HepG2 (cell line): ENCODE measurements at regions of chr2 and their contacts with region 1.

Region 1: DNA sequence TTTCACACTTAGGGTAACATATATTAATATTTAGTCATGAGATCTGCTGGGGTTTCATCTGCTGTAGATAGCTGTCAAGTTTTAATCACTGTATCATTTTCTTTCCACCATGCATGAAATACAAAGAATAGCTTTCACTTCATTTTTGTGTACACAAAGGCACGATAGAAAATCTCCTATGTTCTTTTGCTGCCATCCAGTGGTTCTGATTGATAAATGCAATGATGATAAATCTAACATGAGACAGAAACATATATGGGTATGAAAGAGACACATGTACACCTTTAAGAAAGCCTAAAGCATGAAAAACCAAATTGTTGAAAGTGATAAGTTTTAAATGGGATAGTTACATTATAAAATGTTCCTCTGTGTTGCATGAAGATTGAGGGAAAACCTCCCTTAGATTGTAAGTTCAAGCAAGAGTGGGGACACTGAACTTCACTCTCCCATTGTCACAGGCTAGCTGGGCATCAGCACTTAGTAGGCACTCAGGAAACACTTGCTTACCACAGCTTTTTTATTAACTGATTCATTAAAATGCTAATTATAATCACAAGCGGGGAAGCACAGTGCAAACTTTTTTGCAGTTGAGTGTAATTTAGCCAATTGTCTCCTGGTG is 31.2 kb downstream of the C1D start:
- DNase-seq: peak; percentile 64
- ATAC-seq: peak; percentile 83
- H3K4me3 ChIP-seq: no peak overlapping the region
- H3K27ac ChIP-seq: no peak overlapping the region
- H3K4me1 ChIP-seq: no peaks in the 10 kb centered on the region
- H3K27me3 ChIP-seq: no peaks in the 10 kb centered on the region
- CTCF ChIP-seq: peak; percentile 84
- EP300 ChIP-seq: no peak
- POLR2A ChIP-seq: no peak
- RAD21 ChIP-seq: peak; percentile 74

Region 2: GRCh38 chr2:66434679-66435548 is 1596.7 kb before region 1 on chr2 and contains the start of gene MEIS1:
- CTCF ChIA-PET with region 1: no interaction called
- POLR2A ChIA-PET with region 1: no interaction called
- in situ Hi-C with region 1: loop called (anchors 25 kb)
- intact Hi-C with region 1: no loop called
- DNase-seq: peak; percentile 91
- ATAC-seq: peak; percentile 90
- H3K4me3 ChIP-seq: peak within 1 kb of the TSS; percentile 71 to 93 (median 85)
- H3K27ac ChIP-seq: peak within 1 kb of the TSS; percentile 72
- H3K4me1 ChIP-seq: peaks cover 19% of the 10 kb centered on the region
- H3K27me3 ChIP-seq: peaks cover 0 to 11% of the 10 kb centered on the region in 2 experiments; a peak in 3 of 5 replicates
- CTCF ChIP-seq: peak; percentile 38
- EP300 ChIP-seq: peak; percentile 35 to 60; a peak in 2 of 4 replicates
- POLR2A ChIP-seq: peak; percentile 95 to 96
- RAD21 ChIP-seq: no peak
- total RNA-seq, gene MEIS1: 4.5 and 6.0 TPM in 2 replicates

Region 3: GRCh38 chr2:67215214-67216055 is 816.2 kb before region 1 on chr2:
- CTCF ChIA-PET with region 1: no interaction called
- POLR2A ChIA-PET with region 1: no interaction called
- in situ Hi-C with region 1: no loop called
- intact Hi-C with region 1: loop called (anchors 5 kb)
- DNase-seq: peak; percentile 35
- ATAC-seq: peak; percentile 99
- H3K4me3 ChIP-seq: no peak overlapping the region
- H3K27ac ChIP-seq: no peak overlapping the region
- H3K4me1 ChIP-seq: no peaks in the 10 kb centered on the region
- H3K27me3 ChIP-seq: no peaks in the 10 kb centered on the region
- CTCF ChIP-seq: peak; percentile 85
- EP300 ChIP-seq: no peak
- POLR2A ChIP-seq: no peak
- RAD21 ChIP-seq: peak; percentile 89

Region 4: DNA sequence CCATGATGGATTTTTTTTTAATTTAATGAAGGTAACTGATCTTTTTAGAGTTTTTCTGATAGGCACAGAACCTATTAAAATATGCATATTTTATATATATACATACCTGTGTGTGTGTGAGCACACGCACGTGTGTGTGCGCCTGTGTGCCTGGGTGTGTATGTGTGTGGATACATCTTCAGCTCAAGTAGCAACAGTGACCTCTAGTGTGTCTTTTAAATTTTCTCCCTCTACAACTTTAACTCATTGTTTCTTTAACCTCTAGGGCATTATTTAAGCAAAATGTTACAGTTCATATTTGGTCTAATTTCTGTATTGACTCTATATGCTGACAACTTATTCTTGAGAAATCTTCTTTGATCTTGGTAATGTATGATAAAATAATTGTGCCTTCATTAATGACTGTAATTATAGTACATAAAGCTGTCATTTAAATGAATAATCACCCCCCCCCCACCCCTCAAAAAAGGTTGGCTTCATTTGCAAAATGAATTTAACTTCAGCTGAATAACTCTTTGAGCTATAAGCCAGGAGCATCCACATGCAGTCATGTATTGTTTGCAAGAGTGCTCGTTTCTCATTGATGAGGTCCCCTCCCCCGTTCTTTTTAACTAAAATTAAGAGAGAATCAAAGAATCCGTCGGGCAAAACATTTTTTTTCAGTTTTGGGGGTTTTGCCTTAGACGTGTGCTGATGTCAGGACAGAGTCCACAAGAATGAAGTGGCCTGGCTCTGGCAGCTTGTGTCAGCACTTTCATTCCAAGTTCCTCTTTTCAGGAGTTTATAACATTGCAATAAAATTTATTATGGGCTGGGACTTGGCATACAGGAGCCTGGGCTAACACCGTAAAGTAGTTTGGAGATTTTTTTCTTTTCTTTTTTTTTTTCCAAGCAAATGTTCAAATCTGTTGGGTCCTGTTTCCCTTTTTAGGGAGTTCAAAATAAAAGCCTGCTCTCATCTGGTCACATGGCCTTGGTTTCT is 554.6 kb before region 1 on chr2:
- CTCF ChIA-PET with region 1: no interaction called
- POLR2A ChIA-PET with region 1: no interaction called
- in situ Hi-C with region 1: no loop called
- intact Hi-C with region 1: loop called (anchors 5 kb)
- DNase-seq: peak; percentile 32
- ATAC-seq: peak; percentile 80
- H3K4me3 ChIP-seq: no peak overlapping the region
- H3K27ac ChIP-seq: no peak overlapping the region
- H3K4me1 ChIP-seq: no peaks in the 10 kb centered on the region
- H3K27me3 ChIP-seq: no peaks in the 10 kb centered on the region; a peak in 1 of 5 replicates
- CTCF ChIP-seq: peak; percentile 62
- EP300 ChIP-seq: no peak
- POLR2A ChIP-seq: no peak
- RAD21 ChIP-seq: no peak

Region 5: GRCh38 chr2:67846370-67847070 is 185.1 kb before region 1 on chr2:
- CTCF ChIA-PET with region 1: no interaction called
- POLR2A ChIA-PET with region 1: no interaction called
- in situ Hi-C with region 1: no loop called
- intact Hi-C with region 1: loop called (anchors 1 kb)
- DNase-seq: peak; percentile 94
- ATAC-seq: peak; percentile 93
- H3K4me3 ChIP-seq: peak overlapping the region in 1 of 3 experiments; percentile 0; a peak in 1 of 6 replicates
- H3K27ac ChIP-seq: no peak overlapping the region
- H3K4me1 ChIP-seq: peaks cover 7% of the 10 kb centered on the region
- H3K27me3 ChIP-seq: 0 out of 5 replicates have a peak, but pooled peaks cover 0 to 3% of the 10 kb centered on the region in 2 experiments
- CTCF ChIP-seq: peak; percentile 80
- EP300 ChIP-seq: peak; percentile 53 to 56; a peak in 2 of 4 replicates
- POLR2A ChIP-seq: no peak
- RAD21 ChIP-seq: peak; percentile 40

Region 6: DNA sequence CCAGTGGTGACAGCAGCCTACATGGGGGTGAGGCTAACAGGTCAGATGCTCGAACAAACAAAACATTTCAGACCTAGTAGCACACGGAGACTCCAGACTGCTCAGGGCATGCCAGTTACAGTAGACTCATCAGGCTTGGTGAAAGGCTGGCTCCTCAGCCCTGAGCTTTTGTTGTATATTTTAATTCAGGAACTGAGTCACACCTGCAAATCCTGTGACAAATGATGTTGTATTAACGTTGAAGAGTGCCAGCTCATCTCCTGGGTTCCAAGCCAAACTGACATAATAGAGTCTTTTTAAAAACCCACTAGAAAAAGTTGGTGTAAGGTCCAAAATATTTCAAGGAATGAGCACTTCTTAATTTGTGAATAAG is 34.1 kb before region 1 on chr2:
- CTCF ChIA-PET with region 1: no interaction called
- POLR2A ChIA-PET with region 1: no interaction called
- in situ Hi-C with region 1: no loop called
- intact Hi-C with region 1: no loop called
- DNase-seq: no peak
- ATAC-seq: peak; percentile 26; the same call in 1 of the 3 replicates
- H3K4me3 ChIP-seq: no peak overlapping the region
- H3K27ac ChIP-seq: no peak overlapping the region
- H3K4me1 ChIP-seq: no peaks in the 10 kb centered on the region
- H3K27me3 ChIP-seq: no peaks in the 10 kb centered on the region
- CTCF ChIP-seq: no peak
- EP300 ChIP-seq: no peak
- POLR2A ChIP-seq: no peak
- RAD21 ChIP-seq: no peak

Region 7: GRCh38 chr2:68074050-68074449 is 42.4 kb after region 1 on chr2:
- CTCF ChIA-PET with region 1: no interaction called
- POLR2A ChIA-PET with region 1: no interaction called
- in situ Hi-C with region 1: no loop called
- intact Hi-C with region 1: no loop called
- DNase-seq: no peak
- ATAC-seq: no peak
- H3K4me3 ChIP-seq: no peak overlapping the region
- H3K27ac ChIP-seq: no peak overlapping the region
- H3K4me1 ChIP-seq: no peaks in the 10 kb centered on the region
- H3K27me3 ChIP-seq: no peaks in the 10 kb centered on the region
- CTCF ChIP-seq: no peak
- EP300 ChIP-seq: no peak
- POLR2A ChIP-seq: no peak
- RAD21 ChIP-seq: no peak

Region 8: GRCh38 chr2:68206793-68207192 is 175.1 kb after region 1 on chr2:
- CTCF ChIA-PET with region 1: no interaction called
- POLR2A ChIA-PET with region 1: no interaction called
- in situ Hi-C with region 1: no loop called
- intact Hi-C with region 1: no loop called
- DNase-seq: no peak
- ATAC-seq: no peak
- H3K4me3 ChIP-seq: no peak overlapping the region
- H3K27ac ChIP-seq: no peak overlapping the region
- H3K4me1 ChIP-seq: peaks cover 12% of the 10 kb centered on the region
- H3K27me3 ChIP-seq: no peaks in the 10 kb centered on the region
- CTCF ChIP-seq: no peak
- EP300 ChIP-seq: no peak
- POLR2A ChIP-seq: no peak
- RAD21 ChIP-seq: no peak